ENCODE measurements at regions of chr18 and their contacts with region 1.

Region 1: GRCh38 chr18:21179590-21180220 is 62.3 kb upstream of the GREB1L start:
- DNase-seq: no peak
- H3K4me3 ChIP-seq: no peak overlapping the region
- H3K27ac ChIP-seq: no peak overlapping the region
- H3K4me1 ChIP-seq: peaks cover 0 to 7% (median 0%) of the 10 kb centered on the region in 4 donors
- H3K27me3 ChIP-seq: no peaks in the 10 kb centered on the region
- CTCF ChIP-seq: peak; percentile 65 to 79 (median 71)
- EP300 ChIP-seq: no peak
- POLR2A ChIP-seq: no peak

Region 2: DNA sequence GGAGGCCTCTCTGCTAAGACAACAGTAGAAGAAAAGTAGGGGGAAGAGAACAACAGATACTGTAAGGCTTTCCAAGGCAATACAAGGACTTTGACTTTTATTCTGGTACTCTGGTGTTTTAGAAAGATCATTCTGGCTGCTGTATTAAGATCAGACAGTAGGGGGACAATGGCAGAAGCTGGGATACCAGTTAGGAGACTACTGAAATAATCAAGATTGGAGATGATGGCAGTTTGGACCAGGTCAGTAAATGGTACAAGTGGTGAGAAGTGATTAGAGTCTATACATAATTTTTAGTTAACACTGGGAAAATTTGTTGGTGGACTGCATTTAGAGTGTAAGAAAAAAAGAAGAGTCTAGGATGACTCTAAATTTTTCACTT is 207.8 kb before region 1 on chr18:
- intact Hi-C with region 1: loop called (anchors 10 kb)
- DNase-seq: no peak
- H3K4me3 ChIP-seq: no peak overlapping the region
- H3K27ac ChIP-seq: no peak overlapping the region
- H3K4me1 ChIP-seq: no peaks in the 10 kb centered on the region
- H3K27me3 ChIP-seq: no peaks in the 10 kb centered on the region
- CTCF ChIP-seq: peak; percentile 17 to 50 (median 22)
- EP300 ChIP-seq: no peak
- POLR2A ChIP-seq: no peak

Region 3: DNA sequence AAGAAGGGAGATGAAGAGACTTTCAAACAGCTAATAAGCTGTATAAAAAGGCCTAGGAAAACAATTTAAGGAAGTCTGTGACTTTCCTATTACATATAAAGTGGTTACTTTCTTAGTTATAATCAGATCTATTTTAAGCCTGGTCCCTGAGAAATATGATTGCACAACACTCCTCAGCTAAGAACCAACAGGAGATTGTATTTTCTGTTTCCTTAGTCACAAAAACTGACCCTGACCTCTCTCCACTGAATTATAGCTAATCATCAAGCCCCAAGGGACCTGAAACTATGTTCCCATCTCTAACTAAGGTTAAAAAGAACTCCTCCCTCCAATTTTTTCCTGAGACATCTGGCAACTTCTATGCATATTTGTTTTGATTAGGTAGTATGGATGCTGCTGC is 175.0 kb before region 1 on chr18:
- intact Hi-C with region 1: loop called (anchors 5 kb)
- DNase-seq: no peak
- H3K4me3 ChIP-seq: no peak overlapping the region
- H3K27ac ChIP-seq: peak overlapping the region; percentile 57 to 69 (median 64)
- H3K4me1 ChIP-seq: peaks cover 16 to 21% (median 19%) of the 10 kb centered on the region in 4 donors
- H3K27me3 ChIP-seq: no peaks in the 10 kb centered on the region
- CTCF ChIP-seq: no peak
- EP300 ChIP-seq: no peak
- POLR2A ChIP-seq: no peak

Region 4: GRCh38 chr18:21141668-21142422 is 37.9 kb before region 1 on chr18:
- intact Hi-C with region 1: no loop called
- DNase-seq: no peak
- H3K4me3 ChIP-seq: no peak overlapping the region
- H3K27ac ChIP-seq: peak overlapping the region; percentile 56 to 76 (median 62)
- H3K4me1 ChIP-seq: peaks cover 6 to 19% (median 13%) of the 10 kb centered on the region in 4 donors
- H3K27me3 ChIP-seq: no peaks in the 10 kb centered on the region
- CTCF ChIP-seq: no peak
- EP300 ChIP-seq: no peak
- POLR2A ChIP-seq: no peak